Mammary epithelial cell (primary cell): ENCODE measurements at regions of chr1 and their contacts with region 1.

Region 1: GRCh38 chr1:9573723-9574122 is 15.0 kb upstream of the TMEM201 start:
- DNase-seq: no peak
- H3K4me3 ChIP-seq: no peak overlapping the region
- H3K27ac ChIP-seq: no peak overlapping the region
- H3K4me1 ChIP-seq: no peaks in the 10 kb centered on the region
- H3K27me3 ChIP-seq: no peaks in the 10 kb centered on the region
- CTCF ChIP-seq: peak in 1 of 2 donors; percentile 34

Region 2: GRCh38 chr1:9280015-9280860 is 293.5 kb before region 1 on chr1:
- CTCF ChIA-PET with region 1: no interaction called
- dilution Hi-C with region 1: loop called (anchors 5 kb)
- in situ Hi-C with region 1: loop called in 1 of 2 experiments (anchors 25 kb)
- intact Hi-C with region 1: no loop called
- DNase-seq: peak; percentile 88
- H3K4me3 ChIP-seq: peak overlapping the region in 1 of 3 experiments; percentile 16
- H3K27ac ChIP-seq: peak overlapping the region; percentile 13
- H3K4me1 ChIP-seq: peaks cover 34% of the 10 kb centered on the region
- H3K27me3 ChIP-seq: no peaks in the 10 kb centered on the region
- CTCF ChIP-seq: peak in 1 of 2 donors; percentile 29

Region 3: DNA sequence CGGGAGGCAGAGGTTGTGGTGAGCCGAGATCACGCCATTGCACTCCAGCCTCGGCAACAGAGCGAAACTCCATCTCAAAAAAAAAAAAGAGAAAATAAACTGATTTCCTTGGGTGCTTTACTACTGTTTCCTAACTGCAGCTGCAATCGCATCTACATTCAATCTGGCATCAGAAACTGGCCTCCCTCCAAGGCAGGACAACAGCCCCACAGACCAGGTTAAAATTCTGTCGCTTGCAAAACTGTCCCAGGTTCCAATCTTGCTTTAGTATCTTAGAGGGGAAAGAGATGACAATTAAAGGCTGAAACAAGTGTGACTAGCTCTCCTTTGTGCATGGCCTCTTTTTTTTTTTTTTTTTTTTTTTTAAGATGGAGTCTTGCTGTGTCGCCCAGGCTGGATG is 66.8 kb before region 1 on chr1:
- CTCF ChIA-PET with region 1: interaction called, 20 read pairs
- dilution Hi-C with region 1: no loop called
- in situ Hi-C with region 1: no loop called
- intact Hi-C with region 1: no loop called
- DNase-seq: no peak
- H3K4me3 ChIP-seq: no peak overlapping the region
- H3K27ac ChIP-seq: no peak overlapping the region
- H3K4me1 ChIP-seq: no peaks in the 10 kb centered on the region
- H3K27me3 ChIP-seq: no peaks in the 10 kb centered on the region
- CTCF ChIP-seq: no peak

Region 4: DNA sequence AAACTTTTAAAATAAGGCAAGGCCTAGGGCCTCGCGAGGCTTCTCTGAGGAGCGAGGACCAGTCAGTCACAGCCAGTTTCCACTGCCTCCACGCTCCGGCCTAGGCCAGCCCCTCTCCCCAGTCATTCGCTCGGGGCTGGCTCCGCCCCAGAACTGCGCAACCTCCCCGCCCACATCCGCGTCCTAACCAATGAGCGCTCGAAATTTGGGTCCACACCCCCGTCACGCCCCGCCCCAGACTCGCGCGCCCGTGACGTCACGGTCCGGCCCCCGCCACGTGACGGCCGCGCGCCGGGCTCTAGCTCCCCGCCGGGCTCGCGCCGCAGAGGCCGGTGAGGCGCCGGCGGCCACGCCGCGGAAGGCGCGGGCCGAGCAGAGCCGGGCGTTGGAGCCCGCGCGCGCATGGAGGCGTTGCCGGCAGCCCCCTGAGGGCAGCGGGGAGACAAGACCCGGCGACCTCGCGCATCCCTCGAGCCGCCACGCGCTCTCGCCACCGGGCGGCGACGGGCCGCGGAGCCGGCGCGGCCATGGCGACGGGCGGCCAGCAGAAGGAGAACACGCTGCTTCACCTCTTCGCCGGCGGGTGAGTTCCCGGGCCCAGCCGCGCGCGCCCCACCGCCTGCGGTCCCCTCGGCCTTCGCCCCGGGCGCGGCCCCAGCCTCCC is 34.4 kb before region 1 on chr1 and contains the start of gene SLC25A33:
- CTCF ChIA-PET with region 1: interaction called, 8 read pairs
- dilution Hi-C with region 1: loop called (anchors 5 kb)
- in situ Hi-C with region 1: no loop called
- intact Hi-C with region 1: no loop called
- DNase-seq: peak; percentile 92
- H3K4me3 ChIP-seq: peak within 1 kb of the TSS; percentile 57 to 82 (median 66)
- H3K27ac ChIP-seq: peak within 1 kb of the TSS; percentile 73
- H3K4me1 ChIP-seq: peaks cover 12% of the 10 kb centered on the region
- H3K27me3 ChIP-seq: no peaks in the 10 kb centered on the region
- CTCF ChIP-seq: no peak
- total RNA-seq, gene SLC25A33: 2.2 to 4.0 TPM